PC-3 (cell line): ENCODE measurements at regions of chr11 and their contacts with region 1.

Region 1: DNA sequence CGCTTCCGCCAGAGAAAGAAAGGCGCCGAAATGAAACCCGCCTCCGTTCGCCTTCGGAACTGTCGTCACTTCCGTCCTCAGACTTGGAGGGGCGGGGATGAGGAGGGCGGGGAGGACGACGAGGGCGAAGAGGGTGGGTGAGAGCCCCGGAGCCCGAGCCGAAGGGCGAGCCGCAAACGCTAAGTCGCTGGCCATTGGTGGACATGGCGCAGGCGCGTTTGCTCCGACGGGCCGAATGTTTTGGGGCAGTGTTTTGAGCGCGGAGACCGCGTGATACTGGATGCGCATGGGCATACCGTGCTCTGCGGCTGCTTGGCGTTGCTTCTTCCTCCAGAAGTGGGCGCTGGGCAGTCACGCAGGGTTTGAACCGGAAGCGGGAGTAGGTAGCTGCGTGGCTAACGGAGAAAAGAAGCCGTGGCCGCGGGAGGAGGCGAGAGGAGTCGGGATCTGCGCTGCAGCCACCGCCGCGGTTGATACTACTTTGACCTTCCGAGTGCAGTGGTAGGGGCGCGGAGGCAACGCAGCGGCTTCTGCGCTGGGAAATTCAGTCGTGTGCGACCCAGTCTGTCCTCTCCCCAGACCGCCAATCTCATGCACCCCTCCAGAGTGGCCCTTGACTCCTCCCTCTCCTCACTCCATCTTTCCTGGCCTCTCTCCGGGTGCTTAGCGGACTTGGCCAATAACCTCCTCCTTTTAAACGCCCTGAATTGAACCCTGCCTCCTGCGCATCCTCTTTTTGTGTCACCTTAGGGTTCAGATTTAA is at the start of gene ATM:
- DNase-seq: peak; percentile 100
- ATAC-seq: peak; percentile 88
- H3K4me3 ChIP-seq: peak within 1 kb of the TSS; percentile 83
- H3K27ac ChIP-seq: peak within 1 kb of the TSS; percentile 77
- H3K4me1 ChIP-seq: peaks cover 47% of the 10 kb centered on the region
- H3K27me3 ChIP-seq: no peaks in the 10 kb centered on the region
- CTCF ChIP-seq: peak; percentile 86
- total RNA-seq, gene ATM: 40.2 and 55.3 TPM in 2 replicates

Region 2: GRCh38 chr11:108093128-108093904 is 129.6 kb before region 1 on chr11:
- CTCF ChIA-PET with region 1: no interaction called
- POLR2A ChIA-PET with region 1: interaction called, 20 read pairs
- intact Hi-C with region 1: no loop called
- DNase-seq: peak; percentile 53
- ATAC-seq: peak; percentile 89
- H3K4me3 ChIP-seq: no peak overlapping the region
- H3K27ac ChIP-seq: peak overlapping the region; percentile 1; the same call in 1 of the 2 replicates
- H3K4me1 ChIP-seq: peaks cover 10% of the 10 kb centered on the region
- H3K27me3 ChIP-seq: no peaks in the 10 kb centered on the region
- CTCF ChIP-seq: no peak

Region 3: DNA sequence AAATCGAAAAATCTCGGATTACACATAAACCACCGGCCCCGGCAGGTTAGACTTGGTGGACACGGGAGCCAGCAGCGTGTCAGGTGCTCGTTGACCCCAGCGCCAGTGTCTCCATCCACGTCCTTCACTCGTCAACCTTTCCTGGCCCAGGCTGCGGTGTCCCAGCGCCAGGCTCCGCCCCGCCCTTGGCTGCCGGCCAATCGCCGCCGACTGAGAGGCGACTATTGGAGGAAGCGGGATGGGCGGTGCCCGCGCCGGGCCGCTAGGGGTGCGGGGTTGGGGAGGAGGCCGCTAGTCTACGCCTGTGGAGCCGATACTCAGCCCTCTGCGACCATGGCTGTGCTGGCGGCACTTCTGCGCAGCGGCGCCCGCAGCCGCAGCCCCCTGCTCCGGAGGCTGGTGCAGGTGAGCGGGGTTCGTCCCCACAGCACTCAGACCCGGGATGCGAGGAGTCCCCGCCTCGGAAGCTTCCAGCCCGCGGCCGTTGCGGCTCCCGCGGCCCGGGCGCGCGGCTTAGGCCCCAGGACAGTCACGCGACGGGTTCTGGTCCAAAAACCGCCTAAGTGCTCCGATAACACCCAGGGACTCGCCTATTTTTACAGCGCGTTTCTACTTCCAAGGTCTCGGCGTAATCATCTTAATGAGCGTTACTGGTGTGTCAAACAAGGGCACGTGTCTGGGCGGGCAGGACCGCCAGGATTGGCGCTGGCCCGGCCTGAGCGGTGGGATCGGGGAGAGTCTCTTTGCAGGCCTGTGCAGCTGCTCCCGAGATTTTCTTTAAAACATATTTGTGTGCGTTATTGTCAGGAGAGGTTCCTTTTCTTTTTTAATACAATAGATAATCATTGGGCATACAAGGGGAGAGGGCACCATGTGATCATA is 101.4 kb before region 1 on chr11 and contains the start of gene ACAT1:
- CTCF ChIA-PET with region 1: interaction called, 3 read pairs
- POLR2A ChIA-PET with region 1: no interaction called
- intact Hi-C with region 1: loop called (anchors 2 kb)
- DNase-seq: peak; percentile 98
- ATAC-seq: peak; percentile 96
- H3K4me3 ChIP-seq: peak within 1 kb of the TSS; percentile 74
- H3K27ac ChIP-seq: peak within 1 kb of the TSS; percentile 21
- H3K4me1 ChIP-seq: peaks cover 24% of the 10 kb centered on the region
- H3K27me3 ChIP-seq: no peaks in the 10 kb centered on the region
- CTCF ChIP-seq: no peak
- total RNA-seq, gene ACAT1: 180 and 212 TPM in 2 replicates

Region 4: GRCh38 chr11:108497317-108498045 is 274.6 kb after region 1 on chr11:
- CTCF ChIA-PET with region 1: no interaction called
- POLR2A ChIA-PET with region 1: no interaction called
- intact Hi-C with region 1: loop called (anchors 5 kb)
- DNase-seq: peak; percentile 99
- ATAC-seq: peak; percentile 92
- H3K4me3 ChIP-seq: peak overlapping the region; percentile 68
- H3K27ac ChIP-seq: peak overlapping the region; percentile 87
- H3K4me1 ChIP-seq: peaks cover 29% of the 10 kb centered on the region
- H3K27me3 ChIP-seq: no peaks in the 10 kb centered on the region
- CTCF ChIP-seq: no peak